Kidney (tissue), 22 donors: ENCODE measurements at regions of chr21 and their contacts with region 1.

Region 1: DNA sequence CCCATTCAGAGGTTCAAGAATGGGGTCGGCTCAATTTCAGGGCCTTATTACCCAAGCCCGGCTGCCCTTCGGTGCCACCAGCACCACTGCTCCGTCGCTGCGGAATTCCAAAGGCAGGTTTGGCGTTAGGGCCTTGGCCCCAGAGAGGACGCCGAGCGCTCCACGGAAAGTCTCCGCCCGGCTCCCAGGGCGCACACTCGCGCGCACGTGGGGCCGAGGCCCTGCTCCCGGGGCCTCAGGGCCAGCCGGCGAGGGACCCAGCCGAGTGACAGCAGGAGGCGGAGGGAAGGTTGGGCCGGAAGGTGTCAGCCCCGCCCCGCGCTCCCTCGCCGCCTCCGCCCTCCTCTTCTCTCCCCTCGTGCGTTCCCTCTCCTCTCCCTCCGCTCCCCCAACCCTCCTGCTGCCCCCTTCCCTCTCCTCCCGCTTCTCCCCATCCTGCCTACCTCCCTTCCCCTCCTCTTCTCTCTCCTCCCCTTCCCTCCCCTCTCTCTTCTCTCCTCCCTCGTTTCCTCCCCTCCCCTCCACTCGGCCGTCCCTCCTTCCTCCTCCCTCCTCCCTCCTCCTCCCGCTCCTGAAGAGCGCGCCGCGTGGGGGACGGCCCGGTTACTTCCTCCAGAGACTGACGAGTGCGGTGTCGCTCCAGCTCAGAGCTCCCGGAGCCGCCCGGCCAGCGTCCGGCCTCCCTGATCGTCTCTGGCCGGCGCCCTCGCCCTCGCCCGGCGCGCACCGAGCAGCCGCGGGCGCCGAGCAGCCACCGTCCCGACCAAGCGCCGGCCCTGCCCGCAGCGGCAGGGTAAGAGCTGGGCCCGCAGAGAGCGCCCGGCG is at the start of gene ETS2:
- DNase-seq: peak; percentile 90 to 98 (median 94)
- H3K4me3 ChIP-seq: peak within 1 kb of the TSS; percentile 80 to 95 (median 88)
- H3K27ac ChIP-seq: peak within 1 kb of the TSS; percentile 96 to 97
- H3K4me1 ChIP-seq: peaks cover 0 to 2% (median 0%) of the 10 kb centered on the region in 3 donors
- H3K27me3 ChIP-seq: no peaks in the 10 kb centered on the region
- CTCF ChIP-seq: peak; percentile 14
- total RNA-seq, gene ETS2: 178 TPM

Region 2: DNA sequence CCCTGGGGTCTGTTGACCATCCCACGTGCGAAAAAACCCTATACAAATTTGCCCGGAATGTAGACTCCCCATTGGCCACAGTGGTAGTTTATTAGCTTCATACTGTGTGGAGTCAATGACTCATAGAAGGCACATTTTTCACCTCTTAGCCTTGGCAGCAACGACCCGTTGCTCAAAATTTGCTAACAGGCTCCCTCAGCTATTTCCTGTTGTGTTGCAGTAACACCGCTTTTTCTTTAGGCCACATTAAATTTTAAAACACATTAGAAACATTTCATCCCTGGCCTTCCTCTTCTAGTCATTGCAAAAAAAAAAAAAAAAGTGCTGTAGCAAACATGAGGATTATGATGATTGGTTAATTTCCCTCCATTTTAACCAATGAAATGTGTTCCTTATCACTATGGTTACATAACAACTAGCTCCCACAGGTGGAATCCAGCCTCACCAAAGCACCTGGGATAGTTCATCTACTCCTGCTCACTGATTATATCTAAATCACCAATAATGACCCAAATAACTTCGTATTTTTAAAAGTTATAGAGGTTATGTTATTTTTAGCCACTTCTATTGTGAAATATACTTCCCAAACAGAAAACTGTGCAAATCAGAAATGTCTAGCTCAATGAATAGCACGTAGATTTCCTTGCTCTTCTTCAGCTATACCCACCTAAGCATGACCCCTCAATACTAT is 49.7 kb before region 1 on chr21:
- intact Hi-C with region 1: loop called (anchors 10 kb)
- DNase-seq: peak in 4 of 5 donors; percentile 32 to 82 (median 74)
- H3K4me3 ChIP-seq: no peak overlapping the region
- H3K27ac ChIP-seq: peak overlapping the region; percentile 23 to 70
- H3K4me1 ChIP-seq: no peaks in the 10 kb centered on the region
- H3K27me3 ChIP-seq: no peaks in the 10 kb centered on the region
- CTCF ChIP-seq: no peak